ENCODE measurements at regions of chr13 and their contacts with region 1.

Region 1: GRCh38 chr13:24995226-24995804 is 100.6 kb upstream of the PABPC3 start:
- H3K4me3 ChIP-seq: no peak overlapping the region
- H3K27ac ChIP-seq: no peak overlapping the region
- H3K4me1 ChIP-seq: no peaks in the 10 kb centered on the region
- CTCF ChIP-seq: no peak

Region 2: GRCh38 chr13:25037057-25037813 is 41.9 kb after region 1 on chr13:
- CTCF ChIA-PET with region 1: interaction called, 13 read pairs
- POLR2A ChIA-PET with region 1: no interaction called
- H3K4me3 ChIP-seq: no peak overlapping the region
- H3K27ac ChIP-seq: no peak overlapping the region
- H3K4me1 ChIP-seq: no peaks in the 10 kb centered on the region
- CTCF ChIP-seq: peak; percentile 19; the same call in 1 of the 2 replicates

Region 3: DNA sequence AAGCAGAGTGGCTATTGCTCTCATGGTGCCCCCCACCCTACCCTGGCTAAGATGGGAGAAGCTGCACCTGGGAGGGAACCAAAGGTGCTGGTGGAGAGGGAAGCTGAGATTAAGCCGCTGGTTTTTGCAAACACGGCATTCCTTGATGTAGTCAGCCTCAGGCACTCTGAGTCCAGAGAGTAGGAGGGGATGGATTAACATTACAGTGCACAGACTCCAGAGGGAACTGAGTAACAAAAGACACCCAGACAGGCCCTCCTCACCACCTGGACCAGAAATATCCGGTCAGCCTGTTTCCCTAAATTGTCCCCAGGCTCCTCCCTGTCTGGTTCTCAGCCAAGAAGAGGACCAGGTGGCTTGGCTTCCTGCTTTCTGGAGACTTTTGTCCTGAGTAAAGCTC is 71.7 kb after region 1 on chr13:
- CTCF ChIA-PET with region 1: no interaction called
- POLR2A ChIA-PET with region 1: no interaction called
- H3K4me3 ChIP-seq: no peak overlapping the region
- H3K27ac ChIP-seq: no peak overlapping the region
- H3K4me1 ChIP-seq: no peaks in the 10 kb centered on the region
- CTCF ChIP-seq: no peak